B cell (primary cell): ENCODE measurements at regions of chr11 and their contacts with region 1.

Region 1: GRCh38 chr11:111399187-111400031 is 20.3 kb upstream of the POU2AF1 start:
- DNase-seq: peak; percentile 52
- ATAC-seq: peak; percentile 55
- H3K4me3 ChIP-seq: peak overlapping the region in 4 of 5 experiments; percentile 0 to 45 (median 34)
- H3K4me3 Mint-ChIP-seq: peak overlapping the region; percentile 88
- H3K27ac ChIP-seq: peak overlapping the region; percentile 72 to 86
- H3K27ac Mint-ChIP-seq: peak overlapping the region; percentile 93
- H3K4me1 ChIP-seq: peaks cover 57 to 58% of the 10 kb centered on the region in 2 donors
- H3K4me1 Mint-ChIP-seq: peaks cover 73% of the 10 kb centered on the region
- H3K27me3 ChIP-seq: no peaks in the 10 kb centered on the region
- H3K27me3 Mint-ChIP-seq: no peaks in the 10 kb centered on the region
- CTCF ChIP-seq: no peak

Region 2: GRCh38 chr11:111387363-111387762 is 12.0 kb before region 1 on chr11:
- CTCF ChIA-PET with region 1: interaction called, 13 read pairs
- POLR2A ChIA-PET with region 1: interaction called, 10 read pairs
- intact Hi-C with region 1: no loop called
- DNase-seq: no peak
- ATAC-seq: no peak
- H3K4me3 ChIP-seq: no peak overlapping the region
- H3K4me3 Mint-ChIP-seq: no peak overlapping the region
- H3K27ac ChIP-seq: no peak overlapping the region
- H3K27ac Mint-ChIP-seq: no peak overlapping the region
- H3K4me1 ChIP-seq: peaks cover 30 to 34% of the 10 kb centered on the region in 2 donors
- H3K4me1 Mint-ChIP-seq: peaks cover 40% of the 10 kb centered on the region
- H3K27me3 ChIP-seq: no peaks in the 10 kb centered on the region
- H3K27me3 Mint-ChIP-seq: no peaks in the 10 kb centered on the region
- CTCF ChIP-seq: no peak

Region 3: GRCh38 chr11:111414267-111414931 is 15.0 kb after region 1 on chr11:
- CTCF ChIA-PET with region 1: interaction called, 163 read pairs
- POLR2A ChIA-PET with region 1: interaction called, 63 read pairs
- intact Hi-C with region 1: loop called (anchors 1 kb)
- DNase-seq: peak; percentile 61
- ATAC-seq: no peak
- H3K4me3 ChIP-seq: peak overlapping the region in 3 of 5 experiments; percentile 7 to 28 (median 19)
- H3K4me3 Mint-ChIP-seq: peak overlapping the region; percentile 84
- H3K27ac ChIP-seq: peak overlapping the region; percentile 98
- H3K27ac Mint-ChIP-seq: peak overlapping the region; percentile 98
- H3K4me1 ChIP-seq: peaks cover 86 to 95% of the 10 kb centered on the region in 2 donors
- H3K4me1 Mint-ChIP-seq: peaks cover 97% of the 10 kb centered on the region
- H3K27me3 ChIP-seq: no peaks in the 10 kb centered on the region
- H3K27me3 Mint-ChIP-seq: no peaks in the 10 kb centered on the region
- CTCF ChIP-seq: no peak